Lower leg skin (tissue), 4 donors: ENCODE measurements at regions of chr2 and their contacts with region 1.

Region 1: GRCh38 chr2:237059155-237059875 is 26.4 kb upstream of the COPS8 start:
- DNase-seq: no peak
- H3K4me3 ChIP-seq: no peak overlapping the region
- CTCF ChIP-seq: no peak
- POLR2A ChIP-seq: no peak

Region 2: GRCh38 chr2:236352761-236353593 is 706.3 kb before region 1 on chr2:
- intact Hi-C with region 1: loop called (anchors 5 kb)
- DNase-seq: peak in 1 of 2 donors; percentile 56
- H3K4me3 ChIP-seq: no peak overlapping the region
- CTCF ChIP-seq: no peak
- POLR2A ChIP-seq: no peak